ENCODE measurements at regions of chr5 and their contacts with region 1.

Region 1: DNA sequence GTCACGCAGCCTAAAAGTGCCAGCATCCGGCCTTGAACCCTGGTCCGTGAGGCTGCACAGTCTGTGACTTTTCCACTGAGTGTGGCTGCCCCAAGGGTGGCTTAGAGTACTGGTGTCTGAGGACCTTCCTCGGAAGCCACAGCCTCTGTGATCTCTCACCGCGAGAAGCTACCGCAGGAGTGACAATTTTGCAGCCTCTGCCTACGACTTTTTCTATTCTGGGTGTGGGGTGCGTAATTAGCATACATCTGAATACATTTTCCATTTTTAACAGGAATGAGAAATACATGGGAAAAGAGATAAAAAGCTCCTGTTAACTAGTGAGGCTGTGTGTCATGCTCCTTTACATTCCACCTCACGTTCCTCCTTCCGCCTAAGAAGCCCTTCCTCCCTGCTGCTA is 48.3 kb upstream of the HRH2 start:
- DNase-seq: no peak
- H3K4me3 ChIP-seq: no peak overlapping the region
- CTCF ChIP-seq: no peak
- POLR2A ChIP-seq: no peak

Region 2: GRCh38 chr5:174737320-174737719 is 872.2 kb before region 1 on chr5:
- intact Hi-C with region 1: no loop called
- DNase-seq: no peak
- H3K4me3 ChIP-seq: no peak overlapping the region
- CTCF ChIP-seq: no peak
- POLR2A ChIP-seq: no peak

Region 3: GRCh38 chr5:175159956-175160355 is 449.6 kb before region 1 on chr5:
- intact Hi-C with region 1: loop called (anchors 10 kb)
- DNase-seq: no peak
- H3K4me3 ChIP-seq: no peak overlapping the region
- CTCF ChIP-seq: no peak
- POLR2A ChIP-seq: no peak

Region 4: GRCh38 chr5:175895215-175896102 is 285.9 kb after region 1 on chr5:
- intact Hi-C with region 1: no loop called
- DNase-seq: peak in 1 of 2 donors; percentile 24
- H3K4me3 ChIP-seq: no peak overlapping the region
- CTCF ChIP-seq: no peak
- POLR2A ChIP-seq: no peak

Measured in lower leg skin (tissue), 4 donors.